CD8-positive, alpha-beta T cell (primary cell): ENCODE measurements at regions of chr9 and their contacts with region 1.

Region 1: DNA sequence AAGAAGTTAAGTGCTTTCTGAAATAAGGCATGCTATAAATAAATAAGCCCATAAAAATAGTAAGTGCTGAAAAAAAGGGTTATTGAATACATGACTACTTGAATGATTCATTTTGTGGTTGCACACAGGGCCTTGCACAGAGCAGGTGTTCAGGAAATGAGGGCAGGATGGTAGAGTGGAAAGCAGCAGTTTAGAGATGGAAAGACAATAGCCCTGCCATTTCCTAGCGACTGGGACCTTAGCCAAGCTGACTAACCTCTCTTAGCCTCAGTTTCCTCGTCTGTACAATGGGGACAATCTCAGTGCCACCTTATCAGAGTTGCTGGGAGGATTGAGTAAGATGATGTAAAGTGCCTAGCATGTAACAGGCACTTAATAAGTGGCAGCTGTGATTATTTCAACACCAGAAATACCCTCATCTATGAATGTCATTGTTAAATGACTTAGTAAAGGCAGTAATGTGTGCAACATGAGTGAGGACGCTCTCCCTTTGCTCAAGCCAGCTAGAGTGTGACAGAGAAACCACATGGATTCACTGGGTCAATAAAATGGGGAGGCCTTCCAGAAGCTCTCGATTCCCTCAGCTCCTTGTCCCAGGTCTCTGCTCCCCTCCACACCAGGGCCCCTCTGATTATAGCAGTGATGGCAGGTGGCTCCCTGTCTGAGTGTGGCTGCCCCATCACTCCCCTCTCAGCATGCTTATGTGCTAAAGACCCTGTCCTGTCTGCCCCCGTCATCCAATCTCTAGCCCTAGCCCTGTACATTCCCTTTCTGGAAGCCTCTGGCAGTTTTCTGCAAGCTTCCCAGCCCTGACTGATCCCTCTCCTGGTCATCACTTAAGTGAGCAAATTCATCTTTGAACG is 16.0 kb upstream of the PHF19 start:
- DNase-seq: peak in 8 of 9 experiments; percentile 46 to 84 (median 70)
- ATAC-seq: peak; percentile 59
- H3K4me3 ChIP-seq: peak overlapping the region in 1 of 2 experiments; percentile 6
- H3K4me3 Mint-ChIP-seq: peak overlapping the region; percentile 30
- H3K27ac ChIP-seq: peak overlapping the region; percentile 68
- H3K27ac Mint-ChIP-seq: peak overlapping the region; percentile 99
- H3K4me1 ChIP-seq: peaks cover 82% of the 10 kb centered on the region
- H3K4me1 Mint-ChIP-seq: peaks cover 68% of the 10 kb centered on the region
- H3K27me3 ChIP-seq: no peaks in the 10 kb centered on the region
- H3K27me3 Mint-ChIP-seq: no peaks in the 10 kb centered on the region
- CTCF ChIP-seq: no peak

Region 2: DNA sequence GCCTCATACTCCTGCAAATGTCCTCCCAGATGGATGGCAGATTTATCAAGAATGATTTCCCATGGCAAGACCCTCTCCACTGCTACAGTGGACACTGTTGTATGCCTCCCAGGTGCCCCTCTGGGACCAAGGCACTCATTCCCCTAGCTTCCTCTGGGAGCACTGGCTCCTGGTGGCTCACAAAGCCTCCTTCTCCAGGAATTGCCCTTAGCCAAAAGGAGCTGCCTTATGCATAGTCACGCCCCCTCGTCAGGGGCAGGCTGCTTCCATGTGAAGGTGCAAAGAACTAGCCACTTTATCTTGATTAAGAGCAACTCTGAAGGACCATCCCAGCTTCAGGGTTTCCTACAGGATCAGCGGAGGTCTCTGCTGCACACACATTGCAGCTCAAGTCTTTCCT is 671.1 kb before region 1 on chr9:
- CTCF ChIA-PET with region 1: no interaction called
- POLR2A ChIA-PET with region 1: no interaction called
- intact Hi-C with region 1: no loop called
- DNase-seq: no peak
- ATAC-seq: no peak
- H3K4me3 ChIP-seq: no peak overlapping the region
- H3K4me3 Mint-ChIP-seq: no peak overlapping the region
- H3K27ac ChIP-seq: no peak overlapping the region
- H3K27ac Mint-ChIP-seq: no peak overlapping the region
- H3K4me1 ChIP-seq: no peaks in the 10 kb centered on the region
- H3K4me1 Mint-ChIP-seq: no peaks in the 10 kb centered on the region
- H3K27me3 ChIP-seq: no peaks in the 10 kb centered on the region
- H3K27me3 Mint-ChIP-seq: peaks cover 8% of the 10 kb centered on the region
- CTCF ChIP-seq: no peak

Region 3: DNA sequence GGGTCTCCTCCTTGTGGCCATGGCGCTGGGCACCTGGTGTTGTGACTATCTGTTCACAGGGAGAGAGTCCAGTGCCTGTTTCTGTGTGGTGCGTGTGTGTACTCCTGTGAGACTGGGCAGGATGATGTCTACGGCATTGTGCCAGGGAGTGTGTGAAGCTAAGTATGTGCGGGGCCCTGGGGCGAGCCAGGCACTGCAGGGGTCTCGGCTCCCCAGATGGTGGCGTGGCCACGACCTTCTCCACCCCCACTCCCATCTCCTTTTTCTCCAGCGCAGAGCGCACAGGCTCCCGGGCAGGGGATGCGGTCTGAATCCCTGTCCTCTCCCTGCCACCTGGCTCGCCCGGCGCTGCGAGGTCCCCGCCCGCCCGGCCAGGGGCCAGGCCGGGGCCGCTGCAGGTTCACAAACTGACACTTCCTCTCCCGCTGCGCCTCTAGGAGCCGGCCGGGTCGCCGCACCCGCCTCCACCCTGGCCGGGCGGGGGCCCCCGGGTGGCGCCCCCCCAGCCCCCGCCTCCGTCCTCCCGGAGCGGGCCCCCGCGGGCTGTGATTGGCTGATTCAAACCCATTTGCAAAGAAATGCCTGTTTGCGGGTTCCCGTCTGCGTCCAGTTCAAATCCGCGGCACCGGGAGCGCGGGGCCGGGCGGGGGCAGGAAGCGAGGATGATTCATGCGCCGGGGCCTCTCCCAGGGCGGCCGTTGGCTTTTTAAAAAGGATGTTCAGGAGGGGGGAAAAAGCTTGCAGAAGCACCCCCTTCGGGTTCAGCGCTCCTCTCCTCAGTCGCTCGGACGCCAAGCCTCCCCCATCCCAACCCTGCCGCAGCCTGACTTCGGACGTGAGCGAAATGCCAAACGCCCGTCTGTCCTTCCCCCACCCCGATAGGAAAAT is 16.8 kb before region 1 on chr9:
- CTCF ChIA-PET with region 1: interaction called, 11 read pairs
- POLR2A ChIA-PET with region 1: interaction called, 192 read pairs
- intact Hi-C with region 1: loop called (anchors 1 to 2 kb)
- DNase-seq: peak; percentile 28 to 89 (median 85)
- ATAC-seq: peak; percentile 47
- H3K4me3 ChIP-seq: peak overlapping the region; percentile 64 to 76
- H3K4me3 Mint-ChIP-seq: peak overlapping the region; percentile 80
- H3K27ac ChIP-seq: peak overlapping the region; percentile 69 to 85
- H3K27ac Mint-ChIP-seq: peak overlapping the region; percentile 88
- H3K4me1 ChIP-seq: peaks cover 48% of the 10 kb centered on the region
- H3K4me1 Mint-ChIP-seq: peaks cover 56% of the 10 kb centered on the region
- H3K27me3 ChIP-seq: no peaks in the 10 kb centered on the region
- H3K27me3 Mint-ChIP-seq: no peaks in the 10 kb centered on the region
- CTCF ChIP-seq: no peak

Region 4: DNA sequence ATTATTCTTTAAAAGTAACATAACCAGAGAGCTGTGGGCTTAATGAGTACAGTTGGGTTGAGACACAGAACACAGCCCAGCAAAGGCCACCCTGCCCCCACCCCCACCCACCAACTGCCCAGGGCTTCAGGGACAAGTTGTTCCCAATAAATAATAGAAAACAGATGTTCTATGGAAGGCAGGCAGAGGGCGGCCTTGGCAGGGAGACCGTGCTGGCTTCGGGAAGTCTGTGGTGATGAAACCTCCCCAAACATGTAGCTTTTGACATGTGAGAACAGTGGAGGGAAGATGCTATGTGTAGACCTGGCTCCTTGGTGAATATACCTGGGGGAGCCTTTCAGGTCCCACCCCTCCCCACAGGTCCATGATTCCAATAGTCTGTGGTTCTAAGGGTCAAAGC is 23.6 kb after region 1 on chr9:
- CTCF ChIA-PET with region 1: interaction called, 8 read pairs
- POLR2A ChIA-PET with region 1: interaction called, 1,009 read pairs
- intact Hi-C with region 1: loop called in 1 of 2 experiments (anchors 1 kb)
- DNase-seq: no peak
- ATAC-seq: no peak
- H3K4me3 ChIP-seq: no peak overlapping the region
- H3K4me3 Mint-ChIP-seq: peak overlapping the region; percentile 16
- H3K27ac ChIP-seq: peak overlapping the region in 1 of 2 experiments; percentile 14
- H3K27ac Mint-ChIP-seq: peak overlapping the region; percentile 90
- H3K4me1 ChIP-seq: peaks cover 73% of the 10 kb centered on the region
- H3K4me1 Mint-ChIP-seq: peaks cover 86% of the 10 kb centered on the region
- H3K27me3 ChIP-seq: no peaks in the 10 kb centered on the region
- H3K27me3 Mint-ChIP-seq: no peaks in the 10 kb centered on the region
- CTCF ChIP-seq: no peak